PC-3 (cell line): ENCODE measurements at regions of chr14 and their contacts with region 1.

Region 1: GRCh38 chr14:79011091-79011919 is 841.1 kb downstream of the NRXN3 start:
- DNase-seq: peak; percentile 85
- ATAC-seq: peak; percentile 97
- H3K4me3 ChIP-seq: peak overlapping the region; percentile 23; the same call in 1 of the 2 replicates
- H3K27ac ChIP-seq: peak overlapping the region; percentile 88
- H3K4me1 ChIP-seq: peaks cover 14% of the 10 kb centered on the region
- H3K27me3 ChIP-seq: no peaks in the 10 kb centered on the region
- CTCF ChIP-seq: peak; percentile 47

Region 2: GRCh38 chr14:78697341-78697740 is 314.0 kb before region 1 on chr14:
- CTCF ChIA-PET with region 1: no interaction called
- POLR2A ChIA-PET with region 1: no interaction called
- intact Hi-C with region 1: no loop called
- DNase-seq: peak; percentile 56
- ATAC-seq: no peak; the same call in 1 of the 2 replicates
- H3K4me3 ChIP-seq: no peak overlapping the region
- H3K27ac ChIP-seq: no peak overlapping the region
- H3K4me1 ChIP-seq: no peaks in the 10 kb centered on the region
- H3K27me3 ChIP-seq: no peaks in the 10 kb centered on the region
- CTCF ChIP-seq: peak; percentile 70

Region 3: GRCh38 chr14:79201550-79202207 is 190.4 kb after region 1 on chr14:
- CTCF ChIA-PET with region 1: no interaction called
- POLR2A ChIA-PET with region 1: no interaction called
- intact Hi-C with region 1: loop called (anchors 5 kb)
- DNase-seq: peak; percentile 23
- ATAC-seq: peak; percentile 84
- H3K4me3 ChIP-seq: no peak overlapping the region
- H3K27ac ChIP-seq: no peak overlapping the region
- H3K4me1 ChIP-seq: no peaks in the 10 kb centered on the region
- H3K27me3 ChIP-seq: no peaks in the 10 kb centered on the region
- CTCF ChIP-seq: no peak

Region 4: DNA sequence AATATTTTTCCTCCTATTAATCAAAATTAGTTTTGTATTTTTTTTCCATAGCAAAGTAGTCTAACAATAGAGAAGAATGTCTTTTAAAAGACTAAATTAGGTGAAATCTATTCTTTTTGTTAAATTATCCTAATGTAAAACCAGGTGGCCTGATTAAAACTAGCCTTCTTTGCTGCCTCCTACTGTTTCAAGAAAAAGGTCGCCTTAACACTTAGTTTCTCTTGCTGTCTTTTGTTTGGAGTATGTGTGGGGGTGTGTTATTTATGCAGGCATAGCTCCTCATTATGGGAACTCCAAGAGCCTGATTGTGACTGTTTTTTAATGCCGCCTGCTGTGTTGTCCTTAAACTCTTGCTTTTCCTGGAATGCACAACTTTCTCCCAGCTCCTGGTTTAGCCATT is 344.7 kb after region 1 on chr14:
- CTCF ChIA-PET with region 1: no interaction called
- POLR2A ChIA-PET with region 1: no interaction called
- intact Hi-C with region 1: loop called (anchors 1 kb)
- DNase-seq: peak; percentile 25
- ATAC-seq: no peak; the same call in 1 of the 2 replicates
- H3K4me3 ChIP-seq: no peak overlapping the region
- H3K27ac ChIP-seq: no peak overlapping the region
- H3K4me1 ChIP-seq: no peaks in the 10 kb centered on the region
- H3K27me3 ChIP-seq: no peaks in the 10 kb centered on the region
- CTCF ChIP-seq: peak; percentile 48; the same call in 1 of the 2 replicates

Region 5: DNA sequence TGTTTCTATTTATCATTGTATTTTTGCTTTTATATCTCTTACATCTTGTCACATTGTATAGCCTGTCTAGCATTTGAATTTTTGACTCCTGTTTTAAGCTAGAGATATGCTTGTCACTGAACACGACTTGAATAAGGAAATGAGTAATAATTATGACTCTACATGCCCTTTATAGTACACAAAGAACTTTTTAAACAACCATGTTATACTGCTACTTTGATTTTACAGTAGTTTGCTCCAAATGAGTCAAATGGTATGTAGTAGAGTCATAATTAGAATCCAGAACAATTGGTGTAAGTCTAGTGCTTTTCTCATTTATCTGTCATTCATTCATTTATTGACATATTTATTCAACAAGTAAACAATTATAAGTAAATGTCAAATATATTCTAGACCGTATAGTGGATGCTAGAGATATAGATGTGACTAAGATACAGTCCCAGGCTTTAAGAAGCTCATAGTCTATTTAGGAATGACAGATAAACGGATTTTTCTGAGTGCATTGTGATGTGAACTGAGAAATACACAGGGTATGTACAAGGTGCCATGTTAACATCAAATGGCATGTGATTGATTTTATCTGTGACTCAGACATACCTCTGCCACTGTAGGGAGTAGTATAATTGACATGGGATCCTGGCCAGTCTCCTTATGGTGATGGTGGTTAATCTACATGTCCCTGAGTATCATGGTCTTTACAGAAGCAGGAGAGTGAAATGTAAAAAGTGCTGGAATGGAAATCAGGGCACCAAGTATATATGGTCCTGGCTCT is 400.3 kb after region 1 on chr14:
- CTCF ChIA-PET with region 1: no interaction called
- POLR2A ChIA-PET with region 1: no interaction called
- intact Hi-C with region 1: loop called (anchors 5 kb)
- DNase-seq: peak; percentile 62
- ATAC-seq: peak; percentile 76
- H3K4me3 ChIP-seq: no peak overlapping the region
- H3K27ac ChIP-seq: peak overlapping the region; percentile 61
- H3K4me1 ChIP-seq: peaks cover 39% of the 10 kb centered on the region
- H3K27me3 ChIP-seq: no peaks in the 10 kb centered on the region
- CTCF ChIP-seq: no peak

Region 6: GRCh38 chr14:79543971-79544697 is 532.8 kb after region 1 on chr14:
- CTCF ChIA-PET with region 1: no interaction called
- POLR2A ChIA-PET with region 1: no interaction called
- intact Hi-C with region 1: loop called (anchors 1 kb)
- DNase-seq: peak; percentile 82
- ATAC-seq: peak; percentile 97
- H3K4me3 ChIP-seq: no peak overlapping the region
- H3K27ac ChIP-seq: peak overlapping the region; percentile 25; the same call in 1 of the 2 replicates
- H3K4me1 ChIP-seq: peaks cover 8% of the 10 kb centered on the region; the same call in 1 of the 2 replicates
- H3K27me3 ChIP-seq: no peaks in the 10 kb centered on the region
- CTCF ChIP-seq: peak; percentile 72

Region 7: DNA sequence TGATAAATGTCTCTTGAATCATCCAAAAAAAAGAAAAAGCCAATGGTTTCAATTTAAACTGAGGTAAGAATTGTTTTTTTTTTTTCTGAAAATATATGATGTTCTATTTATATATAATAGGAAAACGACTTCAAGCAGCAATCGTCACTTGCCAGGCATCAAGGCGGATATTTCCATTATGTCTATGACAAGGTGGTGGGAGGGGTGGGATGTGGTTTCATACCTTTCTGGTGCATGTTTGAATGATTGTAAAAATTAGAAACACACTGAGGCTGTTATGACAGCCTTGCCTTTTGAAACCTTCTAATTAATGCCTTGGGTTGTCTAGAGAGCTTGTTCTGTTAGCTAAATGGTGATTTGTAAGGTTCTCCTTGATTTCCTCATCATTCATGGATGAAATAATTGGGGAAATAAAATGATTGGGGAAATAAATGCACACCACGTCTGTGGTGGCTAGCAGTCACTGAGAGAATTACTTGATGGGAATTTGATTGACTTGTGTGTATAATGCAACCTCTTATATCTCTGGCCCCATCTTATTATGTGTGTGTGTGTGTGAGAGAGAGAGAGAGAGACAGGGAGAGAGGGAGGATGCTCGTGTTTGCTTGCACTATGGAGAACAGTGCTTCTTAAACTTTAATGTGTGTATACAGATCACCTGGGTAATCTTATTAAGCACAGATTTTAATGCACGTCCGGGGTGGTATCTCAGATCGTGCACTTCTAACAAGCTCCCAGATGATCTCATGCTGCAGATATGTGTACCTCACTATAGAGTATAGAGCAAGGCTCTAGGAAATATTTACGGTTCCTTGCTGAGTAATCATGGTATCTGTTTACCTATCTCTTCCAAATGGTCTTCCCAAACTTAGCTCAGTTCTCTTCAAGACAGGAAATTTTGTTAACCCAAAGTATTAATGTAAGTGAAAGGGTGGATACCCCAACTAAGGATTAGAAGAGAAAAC is 697.4 kb after region 1 on chr14:
- CTCF ChIA-PET with region 1: no interaction called
- POLR2A ChIA-PET with region 1: no interaction called
- intact Hi-C with region 1: loop called (anchors 1 kb)
- DNase-seq: peak; percentile 84
- ATAC-seq: peak; percentile 99
- H3K4me3 ChIP-seq: no peak overlapping the region
- H3K27ac ChIP-seq: peak overlapping the region; percentile 60
- H3K4me1 ChIP-seq: peaks cover 15% of the 10 kb centered on the region
- H3K27me3 ChIP-seq: no peaks in the 10 kb centered on the region
- CTCF ChIP-seq: no peak